GM12878 (cell line): ENCODE measurements at regions of chr20 and their contacts with region 1.

Region 1: DNA sequence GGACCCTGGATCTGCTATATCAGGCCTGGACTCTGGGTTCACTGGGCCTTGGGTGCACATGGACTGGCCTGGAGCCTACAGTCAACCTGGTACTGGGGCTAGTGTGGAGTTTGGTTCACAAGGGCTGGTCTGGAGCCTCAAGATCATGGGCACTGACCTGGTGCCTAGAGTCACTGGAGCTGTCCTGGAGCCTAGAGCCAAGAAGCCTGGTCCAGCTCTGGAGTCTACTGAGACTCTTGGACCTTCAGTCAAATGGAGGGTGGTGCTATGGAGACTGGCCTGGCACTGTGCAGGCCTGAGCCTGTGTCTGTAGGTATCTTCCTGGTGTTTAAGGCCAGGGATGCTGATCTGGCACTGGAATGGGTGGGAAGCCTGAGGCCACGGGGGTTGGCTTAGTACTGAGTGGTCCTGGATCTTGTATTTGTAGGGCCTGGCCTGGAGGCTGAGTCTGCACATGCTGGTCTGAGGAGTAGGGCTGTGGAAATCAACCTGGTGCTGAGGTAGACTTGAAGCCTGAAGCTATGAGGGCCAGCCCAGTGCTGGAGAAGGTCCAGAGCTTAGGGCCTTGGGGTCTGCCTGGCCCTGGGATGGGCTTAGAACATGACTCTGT is 16.5 kb upstream of the WFDC9 start:
- DNase-seq: no peak
- ATAC-seq: no peak
- H3K4me3 ChIP-seq: no peak overlapping the region
- H3K27ac ChIP-seq: no peak overlapping the region
- H3K4me1 ChIP-seq: no peaks in the 10 kb centered on the region
- H3K27me3 ChIP-seq: no peaks in the 10 kb centered on the region
- CTCF ChIP-seq: no peak
- EP300 ChIP-seq: no peak
- POLR2A ChIP-seq: no peak
- RAD21 ChIP-seq: no peak

Region 2: DNA sequence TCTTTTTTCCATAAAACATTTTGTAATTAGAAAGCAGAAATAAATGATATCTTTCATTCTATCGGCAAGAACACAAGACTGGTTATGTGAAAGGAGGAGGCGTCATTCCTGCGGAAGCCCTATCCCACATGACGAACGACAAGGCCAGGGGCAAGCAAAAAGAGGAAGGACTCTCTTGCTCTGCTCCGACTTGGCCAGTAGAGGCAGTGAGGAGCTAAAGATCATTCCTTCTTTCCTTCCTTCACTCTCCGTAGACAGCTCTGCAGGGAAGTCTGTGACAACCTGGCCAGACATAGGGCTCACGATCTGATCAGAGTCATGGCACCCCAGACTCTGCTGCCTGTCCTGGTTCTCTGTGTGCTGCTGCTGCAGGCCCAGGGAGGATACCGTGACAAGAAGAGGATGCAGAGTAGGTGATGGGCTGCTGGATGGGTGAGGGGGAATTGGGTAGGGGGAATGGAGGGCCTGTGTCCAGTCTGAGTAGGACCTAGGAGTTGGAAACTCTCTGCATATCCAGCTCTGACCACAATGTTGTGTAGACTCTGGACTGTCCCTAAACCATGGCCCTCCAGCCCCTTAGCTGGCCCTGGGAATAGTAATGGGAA is 17.9 kb before region 1 on chr20 and contains the start of gene WFDC10A:
- CTCF ChIA-PET with region 1: interaction called, 11 read pairs
- POLR2A ChIA-PET with region 1: no interaction called
- RAD21 ChIA-PET with region 1: no interaction called
- SMC1A ChIA-PET with region 1: no interaction called
- in situ Hi-C with region 1: no loop called
- intact Hi-C with region 1: no loop called
- DNase-seq: no peak
- ATAC-seq: peak; percentile 90
- H3K4me3 ChIP-seq: no peak within 1 kb of the TSS
- H3K27ac ChIP-seq: no peak within 1 kb of the TSS
- H3K4me1 ChIP-seq: no peaks in the 10 kb centered on the region
- H3K27me3 ChIP-seq: no peaks in the 10 kb centered on the region; a peak in 1 of 4 replicates
- CTCF ChIP-seq: peak; percentile 63 to 80 (median 71)
- EP300 ChIP-seq: no peak
- POLR2A ChIP-seq: no peak
- RAD21 ChIP-seq: peak; percentile 36
- polyA plus RNA-seq, gene WFDC10A: not detected